Posterior vena cava (tissue), 2 donors: ENCODE measurements at regions of chr9 and their contacts with region 1.

Region 1: GRCh38 chr9:4297151-4297785 is 2.6 kb downstream of the GLIS3 start:
- DNase-seq: peak; percentile 91

Region 2: GRCh38 chr9:2837915-2838314 is 1459.4 kb before region 1 on chr9:
- intact Hi-C with region 1: loop called in 1 of 2 experiments (anchors 10 kb)
- DNase-seq: no peak

Region 3: GRCh38 chr9:4137234-4137633 is 160.0 kb before region 1 on chr9:
- intact Hi-C with region 1: loop called in 1 of 2 experiments (anchors 10 kb)
- DNase-seq: no peak